ENCODE measurements at regions of chr22 and their contacts with region 1.

Region 1: DNA sequence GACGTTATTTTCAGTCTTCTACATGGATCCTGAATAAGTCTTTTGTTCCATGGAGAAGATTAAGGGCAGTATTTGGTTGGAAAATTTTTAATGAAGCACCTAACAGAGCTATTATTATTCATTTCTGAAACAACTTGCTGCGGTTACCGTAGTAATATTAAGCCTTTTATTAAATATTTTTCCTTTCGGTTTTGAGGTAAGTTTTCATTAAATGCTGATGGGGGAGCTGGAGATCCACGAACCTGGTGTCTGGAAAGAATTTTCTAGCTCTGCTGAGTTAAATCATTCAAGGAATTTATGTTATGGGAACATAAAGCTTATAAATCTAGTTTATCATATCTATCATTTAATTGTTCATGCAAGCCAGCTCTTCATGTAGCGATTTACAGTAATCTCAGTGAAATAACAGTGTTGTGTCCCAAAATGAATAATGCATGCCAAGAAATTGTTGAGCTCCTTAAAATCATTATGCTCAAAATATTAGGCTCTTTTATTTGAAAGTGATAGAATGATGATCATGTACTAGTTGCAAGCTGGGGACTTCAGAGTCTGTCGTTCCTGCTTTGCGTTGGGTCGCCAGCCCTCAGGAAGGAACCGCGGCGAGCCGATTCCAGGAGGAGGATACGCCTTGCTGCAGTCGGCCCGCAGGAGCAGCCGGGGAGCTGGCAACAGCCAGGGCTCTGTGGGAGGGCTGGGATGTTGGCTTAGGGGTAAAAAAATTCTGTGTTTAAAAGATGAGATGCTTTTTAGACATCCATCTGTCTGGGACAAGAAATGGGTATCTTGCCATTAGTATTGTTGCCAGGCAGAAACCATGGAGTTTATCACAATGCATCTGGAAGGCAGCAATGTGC is 83.1 kb downstream of the TBC1D22A start:
- DNase-seq: no peak
- H3K4me3 ChIP-seq: peak overlapping the region; percentile 36
- H3K27ac ChIP-seq: peak overlapping the region; percentile 39
- H3K27me3 ChIP-seq: no peaks in the 10 kb centered on the region
- CTCF ChIP-seq: peak; percentile 66

Region 2: DNA sequence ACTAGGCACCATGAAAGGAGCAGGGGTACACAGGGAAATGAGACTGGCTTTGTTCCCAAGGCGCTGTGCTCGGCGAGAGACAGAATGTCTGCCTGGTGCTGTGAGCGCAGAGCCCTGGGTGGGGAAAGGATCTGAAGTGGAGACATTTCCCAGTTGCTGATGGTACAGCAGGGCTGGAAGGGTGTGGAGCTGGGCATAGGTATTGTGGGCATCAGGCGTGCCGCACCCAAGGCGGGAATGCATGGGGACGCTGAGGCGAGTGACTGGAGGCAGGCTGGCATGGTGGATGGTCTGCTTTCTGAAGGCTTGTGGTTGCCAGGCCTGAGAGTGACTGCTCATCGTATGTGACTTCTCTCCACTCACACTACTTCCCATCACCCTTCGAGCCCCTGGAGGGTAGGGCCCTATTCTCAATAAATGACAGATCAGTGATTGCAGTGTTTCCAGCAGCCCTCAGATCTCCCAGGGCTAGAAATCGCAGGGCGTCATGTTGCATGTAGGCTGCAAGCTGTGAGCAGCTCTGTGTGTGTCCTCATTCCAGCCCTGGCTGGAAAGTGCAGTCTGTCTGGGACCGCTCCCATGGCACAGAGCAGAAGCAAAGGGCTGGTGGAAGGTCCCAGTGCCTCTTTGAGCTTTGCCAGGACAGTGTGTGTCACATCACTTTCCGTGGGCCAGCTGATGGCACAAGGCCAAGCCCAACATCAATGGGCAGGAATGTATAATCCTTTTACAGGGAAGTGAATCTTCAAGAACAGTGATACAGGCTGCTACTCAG is 15.4 kb before region 1 on chr22:
- CTCF ChIA-PET with region 1: interaction called, 15 read pairs
- POLR2A ChIA-PET with region 1: interaction called, 5 read pairs
- DNase-seq: no peak
- H3K4me3 ChIP-seq: no peak overlapping the region
- H3K27ac ChIP-seq: peak overlapping the region; percentile 89
- H3K27me3 ChIP-seq: no peaks in the 10 kb centered on the region
- CTCF ChIP-seq: no peak

Region 3: DNA sequence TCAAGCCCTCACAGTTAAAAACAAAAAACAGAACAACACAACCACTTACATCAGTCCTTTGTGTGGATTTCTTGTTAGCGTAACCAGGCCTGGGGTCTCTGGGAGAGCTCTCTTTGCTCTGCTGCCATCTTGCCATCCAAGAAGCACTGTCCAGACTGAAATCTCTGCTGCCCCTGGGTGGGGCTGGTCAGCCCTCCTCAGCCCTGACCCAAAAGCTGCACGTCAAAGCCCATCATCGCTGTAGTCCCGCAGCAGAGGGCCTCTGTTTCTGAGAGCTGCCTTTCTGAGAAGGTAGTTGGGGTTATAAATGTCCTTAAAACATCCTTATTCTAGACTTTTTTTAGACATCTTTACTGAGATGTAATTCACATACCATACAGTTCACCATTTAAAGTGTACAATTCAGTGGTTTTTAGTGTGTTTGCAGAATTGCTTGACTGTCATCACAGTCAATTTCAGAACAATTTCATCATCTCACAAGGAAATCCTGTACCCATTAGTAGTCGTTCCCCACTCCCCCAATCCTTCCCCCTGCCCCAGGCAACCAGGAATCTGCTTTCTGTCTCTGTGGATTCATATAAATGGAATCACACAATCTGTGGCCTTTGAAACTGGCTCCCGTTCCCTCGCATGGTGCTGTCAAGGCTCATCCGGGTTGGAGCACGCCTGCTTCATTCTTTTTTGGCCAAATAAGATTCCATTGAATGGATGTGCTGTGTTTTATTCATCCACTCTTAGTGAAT is 11.8 kb after region 1 on chr22:
- CTCF ChIA-PET with region 1: no interaction called
- POLR2A ChIA-PET with region 1: no interaction called
- DNase-seq: no peak
- H3K4me3 ChIP-seq: no peak overlapping the region
- H3K27ac ChIP-seq: no peak overlapping the region
- H3K27me3 ChIP-seq: no peaks in the 10 kb centered on the region
- CTCF ChIP-seq: no peak

Region 4: DNA sequence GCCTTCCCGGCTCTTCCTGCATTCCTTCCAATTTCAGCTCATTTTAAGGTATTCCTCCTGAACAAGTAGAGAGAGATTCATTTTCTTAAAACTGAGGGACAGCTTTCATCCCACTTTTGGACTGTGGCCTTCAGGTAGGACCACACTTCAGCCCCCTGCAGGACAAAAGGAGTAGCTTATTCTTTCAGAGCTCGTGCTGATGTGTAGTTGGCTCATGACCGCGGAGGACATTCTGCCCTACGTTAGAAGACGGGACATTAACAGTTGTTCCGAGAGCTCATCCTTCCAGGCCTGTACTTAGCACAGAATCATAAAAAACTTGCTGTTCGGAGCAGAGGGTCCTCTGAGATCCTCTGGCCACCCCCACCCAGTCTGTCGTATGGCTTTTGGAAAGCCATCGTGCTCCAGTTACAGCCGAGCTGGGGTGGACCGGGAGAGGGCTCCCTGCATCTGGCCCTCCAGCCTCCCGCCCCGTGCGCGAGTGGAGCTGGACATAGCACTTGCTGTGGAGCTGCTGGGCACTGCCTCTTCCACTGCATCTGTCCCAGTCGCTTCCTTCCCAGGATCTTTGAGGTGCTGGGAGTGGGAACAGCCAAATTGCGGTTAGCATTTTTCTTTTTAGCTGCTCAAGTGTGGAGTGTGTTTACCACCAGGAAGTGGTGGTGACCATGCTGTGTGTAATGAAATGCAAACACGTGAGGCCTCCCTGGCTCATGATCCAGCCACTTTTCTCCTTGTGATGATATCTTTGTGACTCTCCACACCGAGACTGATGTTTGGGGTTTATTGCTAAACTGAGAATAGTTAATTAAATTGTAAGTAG is 167.3 kb after region 1 on chr22:
- CTCF ChIA-PET with region 1: interaction called, 10 read pairs
- POLR2A ChIA-PET with region 1: no interaction called
- DNase-seq: peak; percentile 2
- H3K4me3 ChIP-seq: no peak overlapping the region
- H3K27ac ChIP-seq: no peak overlapping the region
- H3K27me3 ChIP-seq: no peaks in the 10 kb centered on the region
- CTCF ChIP-seq: peak; percentile 26; the same call in 1 of the 2 replicates

Region 5: DNA sequence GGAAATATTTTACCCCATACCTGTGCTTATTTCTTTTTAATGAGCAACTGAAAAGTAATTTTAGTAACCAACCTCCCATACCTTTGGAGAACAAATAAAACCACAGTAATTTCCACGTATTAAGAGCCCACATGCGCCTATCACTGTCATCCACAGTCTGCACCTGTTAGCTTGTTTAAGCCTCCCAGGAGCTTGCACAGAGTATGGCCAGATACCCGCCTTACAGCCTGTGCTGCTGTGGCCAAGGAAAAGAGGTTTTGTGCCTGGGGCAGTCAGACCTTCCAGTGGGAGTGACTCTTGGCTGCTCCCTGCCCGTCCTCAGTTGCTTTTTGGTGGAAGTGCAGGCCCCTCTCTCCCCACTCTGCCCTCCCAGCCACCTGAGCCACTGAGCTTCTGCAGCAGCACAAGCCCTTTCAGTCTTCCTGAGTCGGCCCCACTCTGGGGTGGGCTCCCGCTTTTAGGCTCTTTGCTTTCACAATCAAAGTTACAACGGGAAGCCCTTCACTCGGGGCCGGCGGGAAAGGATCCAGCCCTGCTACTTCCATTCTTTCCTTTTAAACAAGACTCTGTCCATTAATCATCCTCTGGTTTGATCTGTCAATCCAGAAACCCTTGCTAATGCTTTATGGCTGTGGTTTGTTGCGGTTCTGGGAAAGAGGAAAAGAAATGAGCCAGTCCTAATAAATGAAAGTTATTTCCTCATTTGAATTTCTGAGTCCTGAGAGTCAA is 225.7 kb after region 1 on chr22:
- CTCF ChIA-PET with region 1: no interaction called
- POLR2A ChIA-PET with region 1: no interaction called
- DNase-seq: no peak
- H3K4me3 ChIP-seq: no peak overlapping the region
- H3K27ac ChIP-seq: no peak overlapping the region
- H3K27me3 ChIP-seq: no peaks in the 10 kb centered on the region
- CTCF ChIP-seq: no peak

Region 6: GRCh38 chr22:47328550-47329243 is 483.2 kb after region 1 on chr22:
- CTCF ChIA-PET with region 1: no interaction called
- POLR2A ChIA-PET with region 1: no interaction called
- DNase-seq: peak; percentile 83
- H3K4me3 ChIP-seq: no peak overlapping the region
- H3K27ac ChIP-seq: peak overlapping the region; percentile 87
- H3K27me3 ChIP-seq: no peaks in the 10 kb centered on the region
- CTCF ChIP-seq: no peak

Region 7: GRCh38 chr22:48492366-48493320 is 1647.1 kb after region 1 on chr22:
- CTCF ChIA-PET with region 1: interaction called, 16 read pairs
- POLR2A ChIA-PET with region 1: no interaction called
- DNase-seq: peak; percentile 4
- H3K4me3 ChIP-seq: no peak overlapping the region
- H3K27ac ChIP-seq: no peak overlapping the region
- H3K27me3 ChIP-seq: peaks cover 19% of the 10 kb centered on the region
- CTCF ChIP-seq: peak; percentile 80